CD8-positive, alpha-beta T cell (primary cell): ENCODE measurements at regions of chr12 and their contacts with region 1.

Region 1: DNA sequence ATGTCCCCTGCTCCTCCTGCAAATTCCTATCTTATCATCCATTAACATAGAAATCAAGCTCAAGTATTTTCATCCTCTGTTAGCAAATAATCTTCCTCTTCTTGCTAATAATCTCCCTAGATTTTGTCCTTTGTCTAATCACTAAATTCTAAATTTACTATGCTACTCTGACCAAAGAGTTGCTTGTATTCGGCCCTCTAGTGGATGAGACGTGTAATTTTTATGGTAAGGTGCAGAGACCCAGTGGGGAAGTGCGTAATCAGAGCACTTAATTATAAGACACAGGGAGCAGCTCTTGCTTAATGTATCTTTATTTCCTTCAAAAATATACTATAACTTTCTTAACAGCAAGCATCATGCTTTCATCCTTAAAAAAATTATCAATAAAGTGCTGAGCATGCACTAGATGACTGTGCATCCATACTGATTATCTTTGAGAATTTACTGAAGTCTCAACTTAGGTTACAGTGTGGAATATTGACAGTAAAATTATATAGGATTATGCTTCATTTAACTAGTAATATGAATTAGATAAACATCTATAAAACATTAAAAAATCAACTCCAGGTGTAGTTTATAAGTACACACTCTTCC is 212.6 kb downstream of the SLC16A7 start:
- DNase-seq: peak in 2 of 9 experiments; percentile 44 to 51
- ATAC-seq: peak; percentile 49
- H3K4me3 ChIP-seq: no peak overlapping the region
- H3K4me3 Mint-ChIP-seq: no peak overlapping the region
- H3K27ac ChIP-seq: no peak overlapping the region
- H3K27ac Mint-ChIP-seq: no peak overlapping the region
- H3K4me1 ChIP-seq: no peaks in the 10 kb centered on the region
- H3K4me1 Mint-ChIP-seq: no peaks in the 10 kb centered on the region
- H3K27me3 ChIP-seq: no peaks in the 10 kb centered on the region
- H3K27me3 Mint-ChIP-seq: peaks cover 2% of the 10 kb centered on the region
- CTCF ChIP-seq: peak; percentile 80

Region 2: DNA sequence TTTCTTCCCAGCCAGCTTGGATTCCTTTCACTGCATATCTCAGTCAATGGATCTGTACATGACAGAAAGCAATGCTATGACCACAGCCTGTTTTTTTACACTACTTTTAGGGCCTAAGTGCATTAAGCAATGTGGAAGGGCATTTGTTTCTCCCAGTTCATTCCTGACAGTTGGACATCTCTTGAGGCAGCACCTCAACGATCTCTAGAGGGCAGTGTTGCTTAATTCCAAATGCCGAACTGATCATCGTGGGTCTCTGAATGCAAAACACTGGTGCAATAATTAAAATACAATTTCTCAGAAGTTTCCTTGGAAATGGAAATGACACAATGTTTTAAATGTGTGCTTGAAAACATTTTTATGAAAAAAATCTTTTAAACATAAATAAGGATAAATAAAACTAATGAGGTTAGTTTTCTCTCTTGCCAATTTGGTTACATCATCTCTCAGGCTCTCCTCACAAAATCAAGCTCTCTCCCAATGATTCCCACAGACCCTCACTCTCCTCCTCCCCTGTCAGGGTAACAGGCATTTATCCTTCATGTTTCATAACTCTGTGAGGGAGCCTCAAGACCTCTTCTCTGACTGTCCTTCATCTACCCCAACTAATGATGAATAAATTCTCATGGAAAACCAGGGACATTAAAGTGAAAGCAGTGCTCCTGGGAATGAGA is 405.0 kb before region 1 on chr12:
- CTCF ChIA-PET with region 1: interaction called, 38 read pairs
- POLR2A ChIA-PET with region 1: no interaction called
- intact Hi-C with region 1: loop called (anchors 1 to 2 kb)
- DNase-seq: peak in 7 of 9 experiments; percentile 1 to 65 (median 27)
- ATAC-seq: no peak
- H3K4me3 ChIP-seq: no peak overlapping the region
- H3K4me3 Mint-ChIP-seq: no peak overlapping the region
- H3K27ac ChIP-seq: no peak overlapping the region
- H3K27ac Mint-ChIP-seq: no peak overlapping the region
- H3K4me1 ChIP-seq: no peaks in the 10 kb centered on the region
- H3K4me1 Mint-ChIP-seq: peaks cover 2% of the 10 kb centered on the region
- H3K27me3 ChIP-seq: no peaks in the 10 kb centered on the region
- H3K27me3 Mint-ChIP-seq: peaks cover 2% of the 10 kb centered on the region
- CTCF ChIP-seq: peak; percentile 78

Region 3: GRCh38 chr12:59429766-59430165 is 378.6 kb before region 1 on chr12:
- CTCF ChIA-PET with region 1: interaction called, 11 read pairs
- POLR2A ChIA-PET with region 1: no interaction called
- intact Hi-C with region 1: no loop called
- DNase-seq: no peak
- ATAC-seq: no peak
- H3K4me3 ChIP-seq: no peak overlapping the region
- H3K4me3 Mint-ChIP-seq: no peak overlapping the region
- H3K27ac ChIP-seq: no peak overlapping the region
- H3K27ac Mint-ChIP-seq: no peak overlapping the region
- H3K4me1 ChIP-seq: no peaks in the 10 kb centered on the region
- H3K4me1 Mint-ChIP-seq: no peaks in the 10 kb centered on the region
- H3K27me3 ChIP-seq: no peaks in the 10 kb centered on the region
- H3K27me3 Mint-ChIP-seq: peaks cover 2% of the 10 kb centered on the region
- CTCF ChIP-seq: no peak

Region 4: DNA sequence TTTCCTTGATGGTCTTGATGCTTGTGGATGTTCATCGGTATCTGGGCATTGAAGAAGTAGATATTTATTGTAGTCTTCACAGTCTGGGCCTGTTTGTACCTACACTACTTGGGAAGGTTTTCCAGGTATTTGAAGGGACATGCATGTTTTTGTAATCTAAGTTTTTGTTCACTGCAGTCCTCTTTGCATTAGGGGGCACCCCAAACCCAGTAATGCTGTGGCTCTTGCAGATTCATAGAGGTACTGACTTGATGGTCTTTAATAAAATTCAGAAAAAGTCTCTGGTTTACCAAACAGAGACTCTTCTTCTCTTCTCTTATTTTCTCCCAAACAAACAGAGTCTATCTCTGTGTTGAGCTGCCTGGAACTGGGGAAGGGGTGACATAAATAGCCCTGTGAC is 363.5 kb before region 1 on chr12:
- CTCF ChIA-PET with region 1: interaction called, 16 read pairs
- POLR2A ChIA-PET with region 1: no interaction called
- intact Hi-C with region 1: loop called (anchors 1 kb)
- DNase-seq: peak in 4 of 9 experiments; percentile 11 to 44 (median 30)
- ATAC-seq: no peak
- H3K4me3 ChIP-seq: no peak overlapping the region
- H3K4me3 Mint-ChIP-seq: no peak overlapping the region
- H3K27ac ChIP-seq: no peak overlapping the region
- H3K27ac Mint-ChIP-seq: no peak overlapping the region
- H3K4me1 ChIP-seq: no peaks in the 10 kb centered on the region
- H3K4me1 Mint-ChIP-seq: no peaks in the 10 kb centered on the region
- H3K27me3 ChIP-seq: no peaks in the 10 kb centered on the region
- H3K27me3 Mint-ChIP-seq: no peaks in the 10 kb centered on the region
- CTCF ChIP-seq: peak; percentile 46

Region 5: GRCh38 chr12:59595883-59596540 is 212.4 kb before region 1 on chr12 and contains the start of gene SLC16A7:
- CTCF ChIA-PET with region 1: interaction called, 4 read pairs
- POLR2A ChIA-PET with region 1: no interaction called
- intact Hi-C with region 1: loop called (anchors 5 to 10 kb)
- DNase-seq: peak; percentile 62 to 92 (median 85)
- ATAC-seq: peak; percentile 32
- H3K4me3 ChIP-seq: peak within 1 kb of the TSS; percentile 81 to 95
- H3K4me3 Mint-ChIP-seq: peak within 1 kb of the TSS; percentile 90
- H3K27ac ChIP-seq: peak within 1 kb of the TSS; percentile 93 to 94
- H3K27ac Mint-ChIP-seq: peak within 1 kb of the TSS; percentile 98
- H3K4me1 ChIP-seq: peaks cover 43% of the 10 kb centered on the region
- H3K4me1 Mint-ChIP-seq: peaks cover 57% of the 10 kb centered on the region
- H3K27me3 ChIP-seq: no peaks in the 10 kb centered on the region
- H3K27me3 Mint-ChIP-seq: no peaks in the 10 kb centered on the region
- CTCF ChIP-seq: no peak
- total RNA-seq, gene SLC16A7: 14.2 to 16.9 TPM

Region 6: DNA sequence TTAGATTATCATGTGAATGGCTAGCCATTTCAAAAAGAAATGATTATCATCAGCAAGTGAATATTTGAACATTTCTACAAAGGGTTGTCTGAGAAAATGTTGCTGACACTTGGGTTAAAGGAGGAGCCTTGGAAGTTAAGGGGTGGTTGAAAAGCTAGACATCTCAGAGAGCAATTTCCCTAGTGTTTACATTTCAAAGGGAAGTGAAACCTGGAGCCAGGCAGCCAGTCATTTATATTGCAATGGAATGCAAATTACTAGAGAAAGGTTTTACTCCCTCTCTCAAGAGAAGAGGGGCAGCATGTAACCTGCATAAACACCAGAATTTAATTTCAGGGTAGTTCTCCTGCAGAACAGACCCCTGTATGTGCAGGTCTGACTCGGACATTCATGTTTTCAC is 66.4 kb after region 1 on chr12:
- CTCF ChIA-PET with region 1: no interaction called
- POLR2A ChIA-PET with region 1: no interaction called
- intact Hi-C with region 1: no loop called
- DNase-seq: no peak
- ATAC-seq: no peak
- H3K4me3 ChIP-seq: no peak overlapping the region
- H3K4me3 Mint-ChIP-seq: no peak overlapping the region
- H3K27ac ChIP-seq: no peak overlapping the region
- H3K27ac Mint-ChIP-seq: no peak overlapping the region
- H3K4me1 ChIP-seq: no peaks in the 10 kb centered on the region
- H3K4me1 Mint-ChIP-seq: no peaks in the 10 kb centered on the region
- H3K27me3 ChIP-seq: no peaks in the 10 kb centered on the region
- H3K27me3 Mint-ChIP-seq: no peaks in the 10 kb centered on the region
- CTCF ChIP-seq: no peak

Region 7: DNA sequence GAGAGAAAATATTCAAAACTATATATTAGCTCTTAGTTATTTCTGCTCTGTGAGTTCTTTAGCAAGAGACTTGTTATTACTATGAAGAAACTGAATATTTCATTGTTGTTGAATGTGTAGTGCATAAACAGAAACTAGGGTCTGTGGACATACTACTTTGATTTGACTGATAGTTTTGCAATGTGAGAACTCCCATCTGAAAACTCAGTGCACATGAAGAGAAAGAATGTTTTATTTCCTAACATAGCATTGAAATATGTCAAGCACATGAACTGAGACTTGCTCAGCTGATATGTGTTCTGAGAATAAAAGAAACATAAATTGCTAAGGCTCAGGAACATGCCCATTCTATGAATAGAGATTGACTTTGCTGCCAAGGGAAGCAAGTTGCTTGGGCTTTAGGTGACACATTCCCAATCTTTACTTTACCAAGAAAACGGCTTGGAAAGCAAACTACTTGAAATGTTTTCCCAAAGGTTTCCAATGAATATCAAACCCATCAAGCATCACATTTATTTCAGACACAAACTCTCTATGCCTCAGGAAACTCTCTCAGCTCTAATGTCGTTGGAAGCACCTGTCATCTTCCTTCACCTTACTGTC is 77.8 kb after region 1 on chr12:
- CTCF ChIA-PET with region 1: no interaction called
- POLR2A ChIA-PET with region 1: no interaction called
- intact Hi-C with region 1: loop called in 1 of 2 experiments (anchors 2 kb)
- DNase-seq: no peak
- ATAC-seq: no peak
- H3K4me3 ChIP-seq: no peak overlapping the region
- H3K4me3 Mint-ChIP-seq: no peak overlapping the region
- H3K27ac ChIP-seq: no peak overlapping the region
- H3K27ac Mint-ChIP-seq: no peak overlapping the region
- H3K4me1 ChIP-seq: no peaks in the 10 kb centered on the region
- H3K4me1 Mint-ChIP-seq: no peaks in the 10 kb centered on the region
- H3K27me3 ChIP-seq: no peaks in the 10 kb centered on the region
- H3K27me3 Mint-ChIP-seq: no peaks in the 10 kb centered on the region
- CTCF ChIP-seq: no peak